ENCODE measurements at regions of chr1 and their contacts with region 1.

Region 1: GRCh38 chr1:225911191-225912130 is 12.6 kb downstream of the PYCR2 start:
- DNase-seq: peak; percentile 51 to 89 (median 68)
- ATAC-seq: peak; percentile 71 to 93 (median 86)
- H3K4me3 ChIP-seq: peak overlapping the region in 8 of 12 donors; percentile 3 to 40 (median 17)
- H3K27ac ChIP-seq: no peak overlapping the region
- H3K4me1 ChIP-seq: peaks cover 0 to 10% (median 5%) of the 10 kb centered on the region in 12 donors
- H3K27me3 ChIP-seq: no peaks in the 10 kb centered on the region
- CTCF ChIP-seq: peak; percentile 84 to 99 (median 96)
- POLR2A ChIP-seq: no peak

Region 2: DNA sequence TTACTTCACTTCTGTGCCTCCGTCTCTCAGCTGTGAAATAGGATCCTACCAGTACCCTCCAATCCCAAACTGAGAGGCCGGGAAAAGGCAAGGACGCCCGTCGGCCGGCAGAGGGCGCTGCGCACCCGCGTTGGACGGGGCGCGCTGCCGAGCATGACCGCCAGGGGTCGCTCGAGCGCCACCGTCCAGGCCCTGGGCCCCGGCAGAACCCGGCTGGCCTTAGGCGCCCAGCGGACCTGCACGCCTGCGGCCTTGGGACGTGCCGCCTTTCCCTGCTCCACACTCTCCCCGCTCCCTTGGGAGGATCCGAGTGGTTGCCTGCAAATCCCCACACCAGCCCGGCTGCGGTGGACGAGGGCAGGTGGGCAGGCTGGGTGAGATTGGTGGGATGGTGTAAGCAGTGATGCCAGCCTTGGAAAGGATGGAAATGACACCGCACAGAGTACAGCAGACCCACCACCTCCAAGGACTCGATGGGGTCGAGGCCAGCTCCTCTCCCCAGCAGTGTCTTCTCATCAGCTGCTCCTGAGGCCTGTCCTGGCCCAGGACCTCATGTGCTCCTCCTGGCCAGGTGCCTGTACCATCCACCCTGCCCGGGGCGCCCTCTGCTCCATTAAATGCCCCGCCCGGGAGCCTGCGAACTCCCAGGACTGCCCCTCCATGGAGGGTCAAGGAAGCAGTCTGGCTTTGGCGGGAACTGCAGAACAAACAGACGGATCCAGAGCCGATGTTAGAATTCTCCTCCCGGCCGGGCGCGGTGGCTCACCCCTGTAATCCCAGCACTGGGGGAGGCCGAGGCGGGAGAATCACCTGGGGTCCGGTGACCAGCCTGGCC is 436.3 kb before region 1 on chr1:
- intact Hi-C with region 1: loop called (anchors 1 to 5 kb)
- DNase-seq: peak; percentile 62 to 88 (median 66)
- ATAC-seq: peak; percentile 69 to 91 (median 88)
- H3K4me3 ChIP-seq: peak overlapping the region in 5 of 12 donors; percentile 10 to 35 (median 26)
- H3K27ac ChIP-seq: peak overlapping the region in 1 of 12 donors; percentile 13
- H3K4me1 ChIP-seq: peaks cover 0 to 11% (median 5%) of the 10 kb centered on the region in 12 donors
- H3K27me3 ChIP-seq: no peaks in the 10 kb centered on the region
- CTCF ChIP-seq: peak in 11 of 12 donors; percentile 100
- POLR2A ChIP-seq: no peak

Region 3: DNA sequence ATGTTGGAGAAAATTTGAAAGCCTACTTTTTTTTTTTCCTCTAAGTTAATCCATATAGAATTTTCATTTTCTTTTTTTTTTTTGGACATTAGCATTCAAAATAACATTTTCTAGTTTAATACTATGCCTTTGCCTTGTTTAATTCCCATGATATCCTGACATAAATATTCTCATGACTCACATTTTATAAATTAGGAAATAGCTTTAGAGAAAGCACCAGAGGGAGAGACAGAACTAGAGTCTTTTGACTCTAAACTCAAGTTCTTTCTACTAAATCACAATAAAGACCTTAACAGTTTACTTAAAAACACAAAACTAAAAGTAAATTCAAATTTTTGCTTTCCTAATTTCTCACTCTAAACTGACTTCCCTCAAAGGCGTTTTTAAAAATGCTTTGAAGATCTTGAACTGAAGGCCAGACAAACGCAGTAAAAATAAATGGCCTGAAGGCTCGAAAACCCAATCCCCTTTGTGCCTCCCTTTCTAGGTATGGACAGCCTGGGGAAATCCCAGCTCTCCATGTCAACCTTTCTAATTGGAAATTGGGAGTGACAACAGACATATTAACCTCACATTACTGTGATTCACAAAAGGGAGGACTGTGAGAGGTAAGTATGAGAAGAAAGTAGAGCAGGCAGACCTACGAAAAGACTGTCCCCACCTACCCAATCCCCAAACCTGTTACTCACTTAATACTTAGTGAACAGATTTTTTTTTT is 363.2 kb before region 1 on chr1:
- intact Hi-C with region 1: loop called in 1 of 10 experiments (anchors 10 kb)
- DNase-seq: no peak
- ATAC-seq: no peak
- H3K4me3 ChIP-seq: no peak overlapping the region
- H3K27ac ChIP-seq: no peak overlapping the region
- H3K4me1 ChIP-seq: peaks cover 0 to 51% (median 11%) of the 10 kb centered on the region in 12 donors
- H3K27me3 ChIP-seq: no peaks in the 10 kb centered on the region
- CTCF ChIP-seq: no peak
- POLR2A ChIP-seq: no peak

Region 4: GRCh38 chr1:225809842-225810578 is 101.5 kb before region 1 on chr1 and contains the start of gene EPHX1:
- intact Hi-C with region 1: loop called in 1 of 10 experiments (anchors 10 kb)
- DNase-seq: peak; percentile 93 to 95 (median 94)
- ATAC-seq: peak; percentile 87 to 95 (median 92)
- H3K4me3 ChIP-seq: peak within 1 kb of the TSS; percentile 38 to 95 (median 74)
- H3K27ac ChIP-seq: peak within 1 kb of the TSS; percentile 41 to 96 (median 88)
- H3K4me1 ChIP-seq: peaks cover 13 to 52% (median 38%) of the 10 kb centered on the region in 12 donors
- H3K27me3 ChIP-seq: no peaks in the 10 kb centered on the region
- CTCF ChIP-seq: peak in 9 of 12 donors; percentile 10 to 59 (median 43)
- POLR2A ChIP-seq: peak in 1 of 2 donors; percentile 83
- total RNA-seq, gene EPHX1: 29.0 to 96.8 (median 47.0) TPM

Region 5: DNA sequence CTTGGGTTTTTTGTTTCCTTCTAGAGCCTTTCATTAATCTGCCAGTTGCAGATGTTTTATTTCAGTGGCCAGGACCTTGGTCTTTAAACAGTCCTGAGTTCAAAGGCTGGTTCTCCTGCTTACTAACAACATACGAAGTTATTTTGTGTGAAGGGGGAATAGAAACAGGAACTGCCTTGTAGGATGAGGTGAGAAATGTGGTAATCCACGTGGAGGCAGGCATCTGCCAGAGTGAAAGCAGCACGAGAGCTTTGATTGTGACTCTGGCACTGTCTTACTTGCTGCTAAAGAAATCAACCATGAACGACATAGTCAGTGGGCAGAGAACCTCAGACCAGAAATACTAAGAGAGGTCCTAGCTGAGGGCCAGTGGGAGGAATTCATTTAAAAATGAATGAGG is 59.7 kb before region 1 on chr1:
- intact Hi-C with region 1: loop called in 1 of 10 experiments (anchors 10 kb)
- DNase-seq: no peak
- ATAC-seq: no peak
- H3K4me3 ChIP-seq: no peak overlapping the region
- H3K27ac ChIP-seq: no peak overlapping the region
- H3K4me1 ChIP-seq: peaks cover 0 to 41% (median 13%) of the 10 kb centered on the region in 12 donors
- H3K27me3 ChIP-seq: no peaks in the 10 kb centered on the region
- CTCF ChIP-seq: no peak
- POLR2A ChIP-seq: no peak

Region 6: GRCh38 chr1:225881969-225882693 is 29.3 kb before region 1 on chr1 and contains the start of gene TMEM63A:
- intact Hi-C with region 1: loop called in 3 of 10 experiments (anchors 2 to 5 kb)
- DNase-seq: peak; percentile 94 to 98 (median 96)
- ATAC-seq: peak; percentile 85 to 93 (median 92)
- H3K4me3 ChIP-seq: peak within 1 kb of the TSS; percentile 71 to 99 (median 90)
- H3K27ac ChIP-seq: peak within 1 kb of the TSS; percentile 82 to 98 (median 90)
- H3K4me1 ChIP-seq: peaks cover 6 to 56% (median 48%) of the 10 kb centered on the region in 12 donors
- H3K27me3 ChIP-seq: no peaks in the 10 kb centered on the region
- CTCF ChIP-seq: peak in 11 of 12 donors; percentile 16 to 71 (median 50)
- POLR2A ChIP-seq: peak in 1 of 2 donors; percentile 81
- total RNA-seq, gene TMEM63A: 14.4 to 42.7 (median 25.3) TPM

Measured in heart left ventricle (tissue), 16 donors.